Activated B cell treated with CpG ODN at 0.5 μM for 24 hours (primary cell): ENCODE measurements at regions of chr11 and their contacts with region 1.

Region 1: DNA sequence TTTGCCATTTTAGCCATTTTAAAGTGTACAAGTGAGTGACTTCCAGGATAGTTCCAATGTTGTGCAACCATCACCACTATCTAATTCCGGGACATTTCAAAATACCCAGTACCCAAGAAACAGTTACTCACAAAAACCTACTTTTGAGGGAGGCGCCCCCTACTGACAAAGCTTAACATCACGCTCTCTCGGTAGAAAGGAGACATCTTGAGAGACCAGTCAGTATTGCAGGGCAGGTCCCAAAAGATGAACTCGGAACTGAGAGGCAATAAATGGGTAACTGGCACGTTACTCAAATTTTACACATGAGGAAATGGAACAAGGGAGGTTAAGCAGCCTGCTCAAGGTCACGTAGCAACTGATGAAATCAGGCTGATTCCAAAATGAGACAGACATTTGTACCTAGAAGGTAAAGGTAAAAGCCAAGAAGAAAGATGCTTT is 50.0 kb upstream of the POU2AF1 start:
- DNase-seq: no peak
- ATAC-seq: peak; percentile 91
- H3K4me3 Mint-ChIP-seq: no peak overlapping the region
- H3K27ac Mint-ChIP-seq: no peak overlapping the region
- H3K4me1 Mint-ChIP-seq: peaks cover 4% of the 10 kb centered on the region
- H3K27me3 Mint-ChIP-seq: peaks cover 2% of the 10 kb centered on the region
- CTCF ChIP-seq: no peak

Region 2: DNA sequence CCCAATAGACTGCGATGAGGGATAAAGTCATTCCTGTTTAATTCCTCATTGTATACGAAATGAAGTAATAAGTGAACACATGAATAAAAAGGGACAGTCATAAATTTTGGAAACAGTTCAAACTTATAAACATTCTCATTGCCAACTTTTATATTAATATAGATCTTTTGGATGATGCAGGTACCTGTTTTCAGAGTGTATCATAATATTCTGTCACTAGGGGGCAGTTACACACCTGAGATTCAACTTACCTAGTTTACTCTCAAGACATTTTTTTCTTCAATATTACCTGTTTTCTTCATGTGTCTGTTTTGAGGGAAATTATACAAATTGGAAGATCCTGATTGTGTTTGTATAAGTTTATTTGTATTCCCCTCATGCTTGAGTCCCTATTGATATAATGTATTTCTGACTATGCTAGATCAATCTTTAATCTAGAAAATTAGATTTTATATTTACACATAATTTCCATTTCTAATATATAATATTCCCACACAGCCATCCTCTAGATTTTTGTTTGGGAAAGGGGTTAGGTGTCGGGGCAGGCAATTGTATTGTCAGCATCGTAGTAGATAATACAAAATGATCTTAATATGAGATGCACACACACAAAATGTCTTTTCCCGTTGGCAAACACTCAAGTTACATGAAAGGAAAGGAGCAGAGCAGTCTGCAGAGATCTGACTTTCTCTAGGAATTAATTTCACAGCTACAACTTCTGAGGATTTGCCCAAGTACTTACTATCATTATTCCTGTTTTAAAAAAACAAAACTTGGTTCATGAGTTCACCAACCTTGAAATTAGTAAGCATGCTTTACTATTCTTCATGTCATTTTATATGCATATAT is 981.0 kb before region 1 on chr11:
- CTCF ChIA-PET with region 1: interaction called, 5 read pairs
- POLR2A ChIA-PET with region 1: no interaction called
- intact Hi-C with region 1: loop called (anchors 5 kb)
- DNase-seq: no peak
- ATAC-seq: no peak
- H3K4me3 Mint-ChIP-seq: no peak overlapping the region
- H3K27ac Mint-ChIP-seq: no peak overlapping the region
- H3K4me1 Mint-ChIP-seq: peaks cover 7% of the 10 kb centered on the region
- H3K27me3 Mint-ChIP-seq: no peaks in the 10 kb centered on the region
- CTCF ChIP-seq: no peak

Region 3: DNA sequence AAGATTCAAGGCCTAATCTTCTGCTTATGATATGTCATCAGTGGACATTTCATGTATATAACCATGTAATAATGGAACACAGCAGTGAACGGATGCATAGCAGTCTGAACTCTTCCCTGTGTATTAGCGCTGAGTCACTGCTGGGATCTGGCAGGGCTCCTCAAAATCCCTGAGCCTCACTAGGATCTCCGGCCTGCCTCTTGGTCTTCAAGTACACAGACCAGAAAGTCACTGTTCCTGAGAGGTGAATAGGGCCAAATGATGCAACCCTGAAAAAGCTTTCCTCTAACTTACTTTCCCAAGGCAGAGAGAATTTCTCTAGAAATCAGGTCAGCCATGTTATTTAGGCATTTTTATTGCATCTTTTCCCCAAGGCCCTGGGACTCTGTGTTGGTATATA is 85.1 kb before region 1 on chr11:
- CTCF ChIA-PET with region 1: interaction called, 11 read pairs
- POLR2A ChIA-PET with region 1: no interaction called
- intact Hi-C with region 1: no loop called
- DNase-seq: no peak
- ATAC-seq: no peak
- H3K4me3 Mint-ChIP-seq: no peak overlapping the region
- H3K27ac Mint-ChIP-seq: no peak overlapping the region
- H3K4me1 Mint-ChIP-seq: peaks cover 32% of the 10 kb centered on the region
- H3K27me3 Mint-ChIP-seq: no peaks in the 10 kb centered on the region
- CTCF ChIP-seq: no peak

Region 4: GRCh38 chr11:111359223-111360149 is 69.6 kb before region 1 on chr11:
- CTCF ChIA-PET with region 1: interaction called, 144 read pairs
- POLR2A ChIA-PET with region 1: interaction called, 30 read pairs
- intact Hi-C with region 1: loop called (anchors 1 kb)
- DNase-seq: no peak
- ATAC-seq: peak; percentile 51
- H3K4me3 Mint-ChIP-seq: no peak overlapping the region
- H3K27ac Mint-ChIP-seq: no peak overlapping the region
- H3K4me1 Mint-ChIP-seq: peaks cover 24% of the 10 kb centered on the region
- H3K27me3 Mint-ChIP-seq: no peaks in the 10 kb centered on the region
- CTCF ChIP-seq: no peak

Region 5: DNA sequence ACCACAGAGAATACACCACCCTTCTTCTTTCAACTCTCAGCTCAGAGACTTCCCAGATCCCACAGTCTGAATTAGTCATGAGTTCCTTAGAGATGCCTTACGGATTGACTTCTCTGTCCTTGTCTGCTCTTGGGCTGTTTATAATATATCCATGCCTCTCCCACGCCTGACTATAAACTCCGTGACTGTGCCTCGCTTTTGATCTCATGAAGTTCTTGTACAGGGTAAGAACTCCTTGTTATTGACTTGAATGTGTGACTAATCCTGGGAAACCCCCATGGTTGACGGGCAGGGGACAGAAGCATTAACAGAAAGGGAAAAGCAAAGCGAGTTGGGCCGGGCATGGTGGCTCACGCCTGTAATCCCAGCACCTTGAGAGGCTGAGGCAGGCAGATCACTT is 12.4 kb after region 1 on chr11:
- CTCF ChIA-PET with region 1: interaction called, 42 read pairs
- POLR2A ChIA-PET with region 1: interaction called, 4 read pairs
- intact Hi-C with region 1: loop called (anchors 2 kb)
- DNase-seq: no peak
- ATAC-seq: no peak
- H3K4me3 Mint-ChIP-seq: no peak overlapping the region
- H3K27ac Mint-ChIP-seq: no peak overlapping the region
- H3K4me1 Mint-ChIP-seq: peaks cover 44% of the 10 kb centered on the region
- H3K27me3 Mint-ChIP-seq: no peaks in the 10 kb centered on the region
- CTCF ChIP-seq: no peak